Left ventricle myocardium inferior (tissue), 1 donor: ENCODE measurements at regions of chr7 and their contacts with region 1.

Region 1: GRCh38 chr7:124188576-124188975 is 155.7 kb upstream of the TMEM229A start:
- DNase-seq: no peak
- H3K4me3 ChIP-seq: no peak overlapping the region
- H3K27ac ChIP-seq: no peak overlapping the region
- H3K4me1 ChIP-seq: peaks cover 6% of the 10 kb centered on the region
- H3K27me3 ChIP-seq: no peaks in the 10 kb centered on the region
- CTCF ChIP-seq: no peak

Region 2: GRCh38 chr7:123674399-123675180 is 514.0 kb before region 1 on chr7:
- intact Hi-C with region 1: no loop called
- DNase-seq: no peak
- H3K4me3 ChIP-seq: no peak overlapping the region
- H3K27ac ChIP-seq: peak overlapping the region; percentile 51
- H3K4me1 ChIP-seq: peaks cover 54% of the 10 kb centered on the region
- H3K27me3 ChIP-seq: no peaks in the 10 kb centered on the region
- CTCF ChIP-seq: no peak

Region 3: GRCh38 chr7:124399941-124400340 is 211.4 kb after region 1 on chr7:
- intact Hi-C with region 1: loop called (anchors 10 kb)
- DNase-seq: no peak
- H3K4me3 ChIP-seq: no peak overlapping the region
- H3K27ac ChIP-seq: no peak overlapping the region
- H3K4me1 ChIP-seq: no peaks in the 10 kb centered on the region
- H3K27me3 ChIP-seq: no peaks in the 10 kb centered on the region
- CTCF ChIP-seq: no peak